HepG2 (cell line): ENCODE measurements at regions of chr10 and their contacts with region 1.

Region 1: GRCh38 chr10:91043173-91043910 is 122.5 kb upstream of the ANKRD1 start:
- DNase-seq: peak; percentile 51
- ATAC-seq: peak; percentile 99
- H3K4me3 ChIP-seq: no peak overlapping the region
- H3K27ac ChIP-seq: no peak overlapping the region
- H3K4me1 ChIP-seq: peaks cover 8% of the 10 kb centered on the region; the same call in 1 of the 2 replicates
- H3K27me3 ChIP-seq: no peaks in the 10 kb centered on the region
- CTCF ChIP-seq: peak; percentile 70
- EP300 ChIP-seq: no peak
- POLR2A ChIP-seq: no peak
- RAD21 ChIP-seq: peak; percentile 38; the same call in 1 of the 2 replicates

Region 2: GRCh38 chr10:89837150-89837888 is 1206.0 kb before region 1 on chr10:
- CTCF ChIA-PET with region 1: no interaction called
- POLR2A ChIA-PET with region 1: no interaction called
- in situ Hi-C with region 1: no loop called
- intact Hi-C with region 1: no loop called
- DNase-seq: no peak
- ATAC-seq: no peak; the same call in 2 of the 3 replicates
- H3K4me3 ChIP-seq: no peak overlapping the region
- H3K27ac ChIP-seq: no peak overlapping the region
- H3K4me1 ChIP-seq: no peaks in the 10 kb centered on the region
- H3K27me3 ChIP-seq: no peaks in the 10 kb centered on the region
- CTCF ChIP-seq: no peak
- EP300 ChIP-seq: no peak
- POLR2A ChIP-seq: no peak
- RAD21 ChIP-seq: no peak

Region 3: DNA sequence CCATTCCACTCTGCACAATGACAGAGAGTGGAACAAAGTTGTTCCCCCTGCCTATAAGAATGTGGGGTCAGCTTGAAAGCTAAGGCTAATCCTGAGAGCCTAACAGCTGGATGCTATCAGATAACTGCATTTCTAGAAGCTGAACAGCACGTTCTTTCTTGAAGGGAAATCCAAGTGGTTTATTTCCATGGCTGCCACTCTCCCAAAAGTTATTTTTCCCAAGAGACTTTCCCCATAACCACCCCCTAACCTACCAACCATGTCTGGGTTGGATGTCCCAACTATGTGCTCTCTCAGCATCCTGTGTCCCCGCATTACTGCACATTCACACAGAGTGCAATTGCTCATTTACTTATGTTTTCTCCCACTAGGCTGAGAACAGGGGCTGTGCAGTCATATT is 18.3 kb after region 1 on chr10:
- CTCF ChIA-PET with region 1: no interaction called
- POLR2A ChIA-PET with region 1: no interaction called
- in situ Hi-C with region 1: no loop called
- intact Hi-C with region 1: no loop called
- DNase-seq: no peak
- ATAC-seq: no peak
- H3K4me3 ChIP-seq: no peak overlapping the region
- H3K27ac ChIP-seq: no peak overlapping the region
- H3K4me1 ChIP-seq: no peaks in the 10 kb centered on the region
- H3K27me3 ChIP-seq: no peaks in the 10 kb centered on the region
- CTCF ChIP-seq: no peak
- EP300 ChIP-seq: no peak
- POLR2A ChIP-seq: no peak
- RAD21 ChIP-seq: no peak

Region 4: DNA sequence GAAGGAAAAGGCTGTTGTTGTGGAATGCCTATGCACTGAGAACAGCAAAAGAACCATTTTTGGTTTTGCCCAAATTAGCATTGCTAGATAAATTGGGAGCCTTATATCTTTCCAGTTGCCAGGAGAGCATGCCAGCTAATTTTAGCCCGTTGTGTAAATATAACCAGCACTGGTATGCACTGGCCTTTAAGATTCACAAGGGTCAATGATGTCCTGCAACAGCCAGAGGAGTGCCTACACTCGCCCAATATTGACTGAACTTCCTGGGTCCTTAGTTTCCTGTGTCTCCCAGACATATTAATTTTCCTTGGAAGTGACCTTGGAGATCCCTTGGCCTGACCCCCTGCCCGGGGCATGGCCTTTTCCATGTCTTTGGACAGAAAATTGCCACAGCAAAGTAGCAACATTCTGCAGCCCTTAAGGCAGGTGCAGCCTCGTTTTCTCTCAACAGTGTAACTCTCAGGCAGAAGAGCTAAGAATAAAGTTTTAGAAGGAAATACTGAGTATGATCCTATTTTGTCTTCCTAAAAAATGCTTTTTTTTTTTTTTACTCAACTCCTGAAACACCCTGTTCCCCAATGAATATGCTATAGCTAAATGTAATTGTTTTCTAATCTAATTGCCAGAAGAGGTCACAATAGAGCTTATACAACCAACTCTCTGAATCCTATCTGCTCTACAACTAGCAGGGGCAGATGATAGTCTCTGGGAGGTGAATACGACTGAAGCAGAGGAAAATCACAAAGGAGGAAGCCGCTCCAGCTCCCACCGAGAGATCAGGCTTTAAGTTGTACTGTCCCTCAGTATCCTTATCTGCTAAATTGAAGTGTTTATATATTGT is 45.2 kb after region 1 on chr10:
- CTCF ChIA-PET with region 1: no interaction called
- POLR2A ChIA-PET with region 1: no interaction called
- in situ Hi-C with region 1: loop called (anchors 5 kb)
- intact Hi-C with region 1: no loop called
- DNase-seq: peak; percentile 30
- ATAC-seq: peak; percentile 86
- H3K4me3 ChIP-seq: no peak overlapping the region
- H3K27ac ChIP-seq: no peak overlapping the region
- H3K4me1 ChIP-seq: no peaks in the 10 kb centered on the region
- H3K27me3 ChIP-seq: no peaks in the 10 kb centered on the region
- CTCF ChIP-seq: peak; percentile 61
- EP300 ChIP-seq: no peak
- POLR2A ChIP-seq: no peak
- RAD21 ChIP-seq: no peak

Region 5: GRCh38 chr10:91127341-91128082 is 84.2 kb after region 1 on chr10:
- CTCF ChIA-PET with region 1: no interaction called
- POLR2A ChIA-PET with region 1: no interaction called
- in situ Hi-C with region 1: no loop called
- intact Hi-C with region 1: no loop called
- DNase-seq: no peak
- ATAC-seq: no peak
- H3K4me3 ChIP-seq: no peak overlapping the region
- H3K27ac ChIP-seq: no peak overlapping the region
- H3K4me1 ChIP-seq: no peaks in the 10 kb centered on the region
- H3K27me3 ChIP-seq: peaks cover 0 to 6% of the 10 kb centered on the region in 2 experiments; a peak in 1 of 5 replicates
- CTCF ChIP-seq: no peak
- EP300 ChIP-seq: no peak
- POLR2A ChIP-seq: no peak
- RAD21 ChIP-seq: no peak

Region 6: GRCh38 chr10:91242940-91243339 is 199.6 kb after region 1 on chr10:
- CTCF ChIA-PET with region 1: no interaction called
- POLR2A ChIA-PET with region 1: no interaction called
- in situ Hi-C with region 1: no loop called
- intact Hi-C with region 1: no loop called
- DNase-seq: no peak
- ATAC-seq: no peak
- H3K4me3 ChIP-seq: no peak overlapping the region
- H3K27ac ChIP-seq: no peak overlapping the region
- H3K4me1 ChIP-seq: peaks cover 25% of the 10 kb centered on the region
- H3K27me3 ChIP-seq: no peaks in the 10 kb centered on the region
- CTCF ChIP-seq: no peak
- EP300 ChIP-seq: no peak
- POLR2A ChIP-seq: no peak
- RAD21 ChIP-seq: no peak